ENCODE measurements at regions of chr9 and their contacts with region 1.

Region 1: GRCh38 chr9:104108315-104108714 is 14.2 kb downstream of the SMC2 start:
- DNase-seq: no peak
- H3K4me3 ChIP-seq: no peak overlapping the region
- H3K27ac ChIP-seq: no peak overlapping the region
- H3K4me1 ChIP-seq: no peaks in the 10 kb centered on the region
- H3K27me3 ChIP-seq: no peaks in the 10 kb centered on the region
- CTCF ChIP-seq: no peak
- POLR2A ChIP-seq: no peak

Region 2: DNA sequence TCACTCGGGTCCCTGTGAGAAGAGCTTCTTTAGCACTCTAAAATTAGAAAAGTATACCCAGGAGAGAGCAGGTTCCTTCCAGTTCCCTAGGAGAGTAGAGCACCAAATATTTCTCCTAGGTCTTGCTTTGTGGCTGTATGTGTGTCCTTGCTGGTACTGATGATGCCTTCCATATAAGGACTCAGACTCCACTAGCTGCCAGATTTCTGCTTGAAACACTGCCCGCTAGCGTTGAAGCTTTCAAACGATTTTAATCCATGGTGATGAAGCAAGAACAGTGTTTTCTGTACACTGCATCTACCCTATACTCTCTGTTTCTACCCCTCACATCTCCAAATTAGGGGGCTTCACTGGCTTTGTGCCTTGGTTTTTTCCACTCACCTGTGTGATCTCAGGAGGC is 16.6 kb before region 1 on chr9:
- intact Hi-C with region 1: loop called (anchors 1 kb)
- DNase-seq: no peak
- H3K4me3 ChIP-seq: no peak overlapping the region
- H3K27ac ChIP-seq: peak overlapping the region; percentile 19
- H3K4me1 ChIP-seq: peaks cover 25% of the 10 kb centered on the region
- H3K27me3 ChIP-seq: no peaks in the 10 kb centered on the region
- CTCF ChIP-seq: no peak
- POLR2A ChIP-seq: no peak

Measured in vagina (tissue), 2 donors.